Astrocyte of the cerebellum (primary cell): ENCODE measurements at regions of chr13 and their contacts with region 1.

Region 1: DNA sequence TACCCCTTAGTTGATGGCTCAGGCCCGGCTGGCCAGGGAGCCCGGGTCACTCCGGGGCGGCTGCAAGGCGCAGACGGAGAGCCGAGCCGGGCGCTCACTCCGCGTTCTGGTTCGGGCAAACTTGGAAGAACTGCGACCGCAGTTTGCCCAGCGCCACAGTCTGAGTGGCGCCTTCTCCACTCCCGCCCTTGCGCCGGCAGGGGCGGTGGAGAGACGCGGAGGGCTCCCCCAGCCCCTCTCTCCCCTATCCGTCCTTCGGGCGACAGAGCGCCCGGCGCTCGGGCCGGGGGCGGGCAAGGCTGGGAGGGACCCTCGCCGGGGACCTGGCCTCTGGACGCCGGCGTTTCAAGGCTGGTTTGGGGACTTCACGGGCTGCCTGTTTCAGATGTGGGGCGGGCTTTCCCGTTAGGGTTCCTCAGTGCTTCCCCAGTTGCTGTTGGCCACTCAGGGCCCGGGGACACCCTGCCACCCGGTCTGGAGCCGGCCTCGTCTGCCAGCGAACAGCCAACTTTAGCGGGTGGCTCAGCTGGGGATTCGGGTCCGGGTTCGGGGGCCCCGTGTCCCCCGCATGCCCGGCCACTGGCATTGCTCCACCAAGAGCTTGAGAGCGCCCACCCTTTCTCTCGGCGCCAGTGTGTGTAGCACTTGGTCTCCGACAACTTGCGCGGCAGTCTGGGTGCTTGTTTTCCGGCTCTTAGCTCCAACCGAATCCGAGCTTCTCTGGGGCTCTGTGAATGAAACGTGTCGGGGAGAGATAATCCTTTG is 1.5 kb downstream of the GPC6 start:
- DNase-seq: peak; percentile 75
- H3K4me3 ChIP-seq: peak overlapping the region; percentile 96
- CTCF ChIP-seq: peak; percentile 63

Region 2: DNA sequence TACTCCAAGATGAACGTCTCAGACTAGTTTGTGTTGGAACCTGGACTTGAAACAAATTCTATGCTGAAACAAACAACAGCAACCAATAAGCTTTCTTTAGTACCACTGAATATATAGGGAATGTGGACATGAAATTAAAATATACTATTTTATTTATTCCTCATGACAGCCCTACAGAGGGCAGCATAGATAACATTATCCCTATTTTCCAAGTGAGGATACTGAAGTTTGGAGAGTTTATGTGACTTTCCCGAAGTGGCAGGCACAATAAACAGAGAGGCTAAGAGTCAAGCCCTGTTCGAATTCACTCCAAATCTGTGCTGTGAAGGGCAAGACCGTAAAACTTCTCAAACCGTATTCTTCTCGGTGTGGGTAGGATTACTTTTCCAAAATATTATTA is 511.3 kb before region 1 on chr13:
- in situ Hi-C with region 1: loop called (anchors 25 kb)
- DNase-seq: peak; percentile 13
- H3K4me3 ChIP-seq: no peak overlapping the region
- CTCF ChIP-seq: peak; percentile 27

Region 3: DNA sequence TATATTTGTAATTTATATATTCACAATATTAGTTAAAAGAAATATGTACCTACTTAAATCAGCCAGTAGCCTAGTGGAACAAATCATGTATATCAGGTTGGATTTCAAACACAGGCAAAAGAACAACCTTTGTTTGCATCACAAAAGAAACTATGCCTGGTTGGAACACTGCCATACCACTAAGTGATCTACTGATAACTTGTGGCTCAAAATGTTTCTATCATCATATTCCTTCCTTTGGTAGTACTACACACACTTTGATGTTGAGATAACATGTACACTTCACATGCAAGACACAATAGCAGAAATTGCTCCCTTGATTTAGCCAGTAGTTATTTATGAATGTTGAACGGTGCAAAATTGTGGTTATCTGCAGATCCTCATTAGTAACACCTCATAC is 147.5 kb before region 1 on chr13:
- in situ Hi-C with region 1: loop called (anchors 25 kb)
- DNase-seq: peak; percentile 86
- H3K4me3 ChIP-seq: no peak overlapping the region
- CTCF ChIP-seq: no peak

Region 4: DNA sequence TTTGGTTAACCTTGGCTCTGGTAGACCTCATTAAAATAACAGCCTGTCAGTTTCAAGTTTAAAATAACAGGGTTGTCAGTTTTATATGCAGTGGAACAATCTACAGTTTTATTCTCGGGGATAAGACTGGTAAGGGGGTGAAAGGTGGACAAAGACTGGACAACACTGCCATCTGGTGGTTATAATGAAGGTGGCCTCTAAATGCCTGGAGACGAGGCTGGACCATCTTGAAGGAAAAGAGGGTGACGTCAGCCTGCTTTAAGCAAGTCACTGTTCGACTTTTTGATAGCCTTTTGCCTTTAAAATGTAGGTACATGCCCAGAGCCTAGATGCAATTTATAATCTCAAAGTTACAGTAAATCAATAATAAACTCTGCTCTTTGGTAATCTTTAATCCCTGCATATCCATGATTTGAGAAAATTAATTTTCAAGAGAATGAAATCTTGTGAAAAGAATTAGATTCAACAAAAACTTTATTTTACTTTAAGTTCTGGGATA is 1134.4 kb after region 1 on chr13:
- in situ Hi-C with region 1: loop called (anchors 25 kb)
- DNase-seq: peak; percentile 89
- H3K4me3 ChIP-seq: no peak overlapping the region
- CTCF ChIP-seq: peak; percentile 76